ENCODE measurements at regions of chr9 and their contacts with region 1.

Region 1: DNA sequence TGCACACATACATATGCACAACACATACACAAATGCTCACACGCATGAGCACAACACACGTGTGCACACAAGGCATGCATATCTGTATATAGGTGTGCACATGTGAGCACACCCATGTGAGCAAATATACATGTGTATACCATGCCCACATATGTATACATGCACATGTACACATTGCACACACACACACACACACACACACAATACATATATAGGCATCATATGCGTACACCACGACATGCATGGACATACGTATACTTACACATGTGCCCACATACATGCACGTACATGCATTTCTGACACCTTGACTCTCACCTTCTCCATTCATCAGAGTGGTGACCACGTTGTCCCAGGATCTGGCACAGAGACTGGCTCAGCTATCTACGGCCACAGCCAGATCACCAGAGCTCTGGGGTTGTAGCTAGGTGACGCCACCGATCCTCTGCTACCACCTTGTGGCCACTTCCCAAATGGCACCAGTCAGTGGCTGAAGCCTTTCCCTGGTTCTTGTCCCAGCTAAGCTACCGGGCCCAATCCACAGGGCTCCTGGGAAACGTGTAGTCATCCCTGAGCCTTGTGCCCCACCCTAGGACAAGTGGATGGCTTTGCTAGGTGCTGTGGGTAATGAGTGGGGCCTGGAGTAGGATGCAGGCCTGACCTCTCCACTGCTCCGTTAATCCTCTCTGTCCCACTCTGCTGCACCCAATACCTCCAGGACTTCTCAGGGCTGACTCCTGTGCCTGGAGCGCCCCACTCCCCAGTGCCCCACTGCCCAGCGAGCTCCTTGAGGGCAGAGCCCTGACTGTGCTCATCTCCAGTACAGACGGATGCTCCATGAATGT is 194.4 kb downstream of the RGS3 start:
- DNase-seq: peak; percentile 89
- ATAC-seq: peak; percentile 95
- H3K4me3 Mint-ChIP-seq: no peak overlapping the region
- H3K27ac Mint-ChIP-seq: no peak overlapping the region
- H3K4me1 Mint-ChIP-seq: peaks cover 7% of the 10 kb centered on the region
- H3K27me3 Mint-ChIP-seq: peaks cover 20% of the 10 kb centered on the region

Region 2: GRCh38 chr9:113309204-113309813 is 348.6 kb before region 1 on chr9:
- CTCF ChIA-PET with region 1: interaction called, 6 read pairs
- POLR2A ChIA-PET with region 1: no interaction called
- intact Hi-C with region 1: loop called (anchors 1 to 5 kb)
- DNase-seq: peak; percentile 42
- ATAC-seq: peak; percentile 65
- H3K4me3 Mint-ChIP-seq: no peak overlapping the region
- H3K27ac Mint-ChIP-seq: no peak overlapping the region
- H3K4me1 Mint-ChIP-seq: no peaks in the 10 kb centered on the region
- H3K27me3 Mint-ChIP-seq: no peaks in the 10 kb centered on the region

Region 3: GRCh38 chr9:113446323-113446740 is 211.6 kb before region 1 on chr9:
- CTCF ChIA-PET with region 1: interaction called, 138 read pairs
- POLR2A ChIA-PET with region 1: no interaction called
- intact Hi-C with region 1: loop called (anchors 1 to 2 kb)
- DNase-seq: peak; percentile 28
- ATAC-seq: peak; percentile 47
- H3K4me3 Mint-ChIP-seq: no peak overlapping the region
- H3K27ac Mint-ChIP-seq: no peak overlapping the region
- H3K4me1 Mint-ChIP-seq: peaks cover 3% of the 10 kb centered on the region
- H3K27me3 Mint-ChIP-seq: no peaks in the 10 kb centered on the region

Region 4: DNA sequence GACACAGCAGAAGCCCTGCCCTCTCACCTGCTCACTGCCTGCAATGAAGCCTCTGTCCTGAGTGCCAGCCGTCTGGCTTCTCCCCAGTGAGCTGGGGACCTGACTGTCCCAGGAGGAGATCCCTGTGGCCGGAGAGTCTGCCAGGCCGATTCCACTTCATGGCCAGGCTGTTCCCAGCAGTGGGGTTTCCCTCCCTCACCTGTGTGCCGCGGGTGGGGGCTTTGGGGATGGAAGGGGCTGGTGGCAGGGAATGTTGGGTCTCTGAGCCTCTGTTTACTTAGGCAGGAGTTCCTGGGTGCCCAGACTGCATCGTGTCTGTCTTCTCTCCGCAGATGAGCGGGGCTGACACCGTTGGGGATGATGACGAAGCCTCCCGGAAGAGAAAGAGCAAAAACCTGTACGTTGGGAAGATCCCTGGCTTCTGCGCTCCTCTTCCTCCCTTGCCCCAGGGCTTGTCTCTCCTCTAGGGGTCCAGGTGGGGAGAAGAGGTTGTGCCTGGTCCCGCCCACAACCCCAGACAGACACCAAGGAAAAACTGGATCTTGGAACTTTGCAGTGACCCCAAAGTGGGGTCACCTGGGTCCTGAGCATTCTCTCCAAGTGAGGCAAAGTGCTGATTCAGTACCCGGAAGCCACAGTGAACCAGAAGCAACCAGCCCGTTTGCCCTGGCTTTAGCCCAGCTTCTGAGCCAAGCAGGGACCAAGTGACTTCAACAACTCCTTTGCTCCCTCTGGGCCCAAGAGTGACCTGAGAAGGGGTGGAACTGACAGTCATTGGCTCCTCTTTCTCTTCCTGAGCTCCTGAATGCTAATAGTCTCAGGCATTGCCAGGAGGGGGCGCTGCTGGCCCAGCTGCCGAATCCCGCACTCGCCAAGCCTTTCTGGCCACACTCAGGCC is 66.7 kb before region 1 on chr9:
- CTCF ChIA-PET with region 1: interaction called, 502 read pairs
- POLR2A ChIA-PET with region 1: interaction called, 5 read pairs
- intact Hi-C with region 1: loop called (anchors 1 kb)
- DNase-seq: peak; percentile 89
- ATAC-seq: peak; percentile 74
- H3K4me3 Mint-ChIP-seq: no peak overlapping the region
- H3K27ac Mint-ChIP-seq: no peak overlapping the region
- H3K4me1 Mint-ChIP-seq: peaks cover 40% of the 10 kb centered on the region
- H3K27me3 Mint-ChIP-seq: no peaks in the 10 kb centered on the region

Region 5: GRCh38 chr9:113622600-113623400 is 35.1 kb before region 1 on chr9:
- CTCF ChIA-PET with region 1: interaction called, 11 read pairs
- POLR2A ChIA-PET with region 1: interaction called, 5 read pairs
- intact Hi-C with region 1: loop called (anchors 2 to 5 kb)
- DNase-seq: peak; percentile 90
- ATAC-seq: peak; percentile 92
- H3K4me3 Mint-ChIP-seq: peak overlapping the region; percentile 58
- H3K27ac Mint-ChIP-seq: peak overlapping the region; percentile 98
- H3K4me1 Mint-ChIP-seq: peaks cover 57% of the 10 kb centered on the region
- H3K27me3 Mint-ChIP-seq: no peaks in the 10 kb centered on the region

Region 6: DNA sequence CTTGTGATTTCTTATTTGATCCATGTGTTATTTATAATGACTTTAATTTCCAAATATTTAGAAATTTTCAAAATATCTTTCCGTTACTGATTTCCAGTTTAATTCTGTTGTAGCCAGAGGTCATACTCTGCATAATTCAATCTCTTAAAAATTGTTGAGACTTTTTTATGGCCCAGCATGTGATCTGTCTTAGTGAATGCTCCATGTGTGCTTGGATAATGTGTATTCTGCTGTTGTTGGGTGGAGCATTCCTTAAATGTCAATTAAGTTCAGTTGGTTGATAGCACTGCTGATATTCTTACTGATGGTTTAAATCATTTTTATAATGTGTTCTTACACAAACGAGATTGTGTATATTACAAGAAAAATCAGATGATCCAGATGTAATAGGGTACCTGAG is 13.6 kb before region 1 on chr9:
- CTCF ChIA-PET with region 1: interaction called, 11 read pairs
- POLR2A ChIA-PET with region 1: no interaction called
- intact Hi-C with region 1: no loop called
- DNase-seq: no peak
- ATAC-seq: no peak
- H3K4me3 Mint-ChIP-seq: no peak overlapping the region
- H3K27ac Mint-ChIP-seq: no peak overlapping the region
- H3K4me1 Mint-ChIP-seq: no peaks in the 10 kb centered on the region
- H3K27me3 Mint-ChIP-seq: peaks cover 10% of the 10 kb centered on the region

Region 7: DNA sequence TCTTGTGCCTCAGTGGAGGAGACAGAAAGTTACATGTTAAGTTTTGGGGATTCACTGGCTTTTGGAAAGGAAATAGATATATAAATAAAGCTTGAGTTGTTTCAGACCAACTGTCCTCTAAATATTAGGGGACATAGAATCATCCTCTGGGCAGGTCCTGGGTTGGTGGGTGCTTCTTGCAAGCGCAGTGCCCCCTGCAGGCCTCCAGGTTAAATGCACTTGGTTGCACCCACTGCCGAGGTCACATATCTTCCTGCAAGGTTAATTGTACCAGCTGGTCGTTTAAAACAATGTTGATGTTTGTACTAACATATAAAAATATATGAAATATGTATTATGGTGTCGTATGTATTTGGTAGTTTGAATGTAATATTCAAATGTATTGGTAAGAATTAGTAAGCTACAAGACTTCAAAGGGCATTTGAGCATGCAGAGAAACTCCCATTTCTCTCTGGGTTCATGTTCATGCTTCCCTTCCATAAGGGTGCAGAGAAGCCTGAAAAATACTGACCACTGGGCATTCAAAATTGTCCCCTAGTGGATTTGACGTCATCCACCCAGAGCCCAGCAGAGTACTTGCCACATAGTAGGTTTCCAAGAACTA is 305.2 kb after region 1 on chr9:
- CTCF ChIA-PET with region 1: no interaction called
- POLR2A ChIA-PET with region 1: no interaction called
- intact Hi-C with region 1: no loop called
- DNase-seq: peak; percentile 69
- ATAC-seq: peak; percentile 55
- H3K4me3 Mint-ChIP-seq: no peak overlapping the region
- H3K27ac Mint-ChIP-seq: no peak overlapping the region
- H3K4me1 Mint-ChIP-seq: no peaks in the 10 kb centered on the region
- H3K27me3 Mint-ChIP-seq: no peaks in the 10 kb centered on the region

Measured in activated CD4-positive, alpha-beta T cell treated with anti-CD3 and anti-CD28 coated beads for 36 hours (primary cell).